ENCODE measurements at regions of chr14 and their contacts with region 1.

Region 1: DNA sequence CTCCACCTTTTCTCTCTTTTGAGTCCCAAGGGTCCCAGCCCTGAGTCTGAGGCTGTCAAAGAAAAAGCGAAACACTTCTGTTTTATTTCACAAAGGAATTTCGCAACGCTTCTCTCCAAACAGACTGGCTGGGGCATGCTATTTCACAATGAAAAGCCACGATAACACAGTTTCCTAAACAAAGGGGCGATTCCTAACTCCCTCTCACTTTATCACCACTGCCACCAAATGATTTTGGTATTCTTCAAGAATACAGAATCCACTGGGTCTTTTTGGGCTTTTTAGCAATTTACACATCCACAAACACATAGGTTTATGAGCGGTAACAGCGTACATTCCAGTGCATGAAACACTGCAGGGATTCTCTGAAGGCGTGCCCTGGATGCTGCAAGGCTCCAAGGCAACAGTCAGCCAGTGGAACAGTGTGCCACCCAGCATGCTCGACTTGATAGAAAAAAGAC is 161.2 kb downstream of the DAD1 start:
- DNase-seq: peak in 1 of 2 donors; percentile 62
- H3K4me3 ChIP-seq: peak overlapping the region in 1 of 2 donors; percentile 0
- H3K27ac ChIP-seq: peak overlapping the region; percentile 33 to 36
- H3K4me1 ChIP-seq: peaks cover 0 to 42% (median 29%) of the 10 kb centered on the region in 4 donors
- H3K27me3 ChIP-seq: no peaks in the 10 kb centered on the region
- CTCF ChIP-seq: no peak

Region 2: DNA sequence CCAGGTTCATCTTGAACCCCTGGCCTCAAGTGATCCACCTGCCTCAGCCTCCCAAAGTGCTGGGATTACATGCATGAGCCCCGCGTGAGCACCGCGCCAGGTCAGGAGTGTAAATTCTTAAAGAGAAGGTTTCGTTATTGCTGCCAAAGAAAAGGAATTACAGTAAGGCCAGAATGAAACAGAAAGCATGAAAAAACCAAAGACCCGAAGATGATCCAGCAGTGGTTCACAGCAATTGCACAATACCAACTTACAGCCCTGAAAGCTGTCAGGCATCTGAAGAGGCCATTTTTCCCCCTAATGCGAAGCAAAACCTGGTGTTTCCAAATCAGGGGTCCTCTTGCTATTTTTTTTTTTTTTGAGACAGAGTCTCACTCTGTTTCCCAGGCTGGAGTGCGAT is 480.8 kb after region 1 on chr14:
- intact Hi-C with region 1: no loop called
- DNase-seq: no peak
- H3K4me3 ChIP-seq: no peak overlapping the region
- H3K27ac ChIP-seq: no peak overlapping the region
- H3K4me1 ChIP-seq: peaks cover 0 to 7% (median 1%) of the 10 kb centered on the region in 4 donors
- H3K27me3 ChIP-seq: no peaks in the 10 kb centered on the region
- CTCF ChIP-seq: no peak

Region 3: DNA sequence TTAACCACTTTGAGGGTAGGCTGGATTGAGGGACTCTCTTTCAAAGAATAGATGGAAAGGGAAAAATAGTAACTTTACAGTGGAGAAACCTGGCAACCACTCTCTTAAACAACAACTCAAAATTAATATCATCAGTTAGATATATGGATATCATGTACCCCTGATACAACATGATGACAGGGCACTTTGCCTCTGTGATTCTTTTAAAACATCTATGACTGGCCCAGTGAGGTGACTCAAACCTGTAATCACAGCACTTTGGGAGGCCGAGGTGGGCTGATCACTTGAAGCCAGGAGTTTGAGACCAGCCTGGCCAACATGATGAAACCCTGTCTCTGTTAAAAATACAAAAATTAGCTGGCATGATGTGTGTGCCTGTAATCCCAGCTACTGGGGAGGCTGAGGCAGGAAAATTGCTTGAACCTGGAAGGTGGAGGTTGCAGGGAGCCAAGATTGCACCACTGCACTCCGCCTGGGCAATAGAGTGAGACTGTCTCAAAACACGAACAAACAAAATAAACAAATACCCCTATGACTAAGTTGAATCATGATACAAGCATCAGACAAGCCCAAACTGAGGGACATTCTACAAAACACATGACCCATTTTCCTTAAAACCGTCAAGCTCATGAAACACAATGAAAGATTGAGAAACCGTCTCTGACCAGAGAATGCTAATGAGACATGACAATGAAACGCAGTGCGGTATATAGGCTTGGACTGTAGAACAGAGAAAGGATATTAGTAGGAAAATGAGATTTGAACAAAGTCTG is 782.0 kb after region 1 on chr14:
- intact Hi-C with region 1: loop called (anchors 10 kb)
- DNase-seq: no peak
- H3K4me3 ChIP-seq: no peak overlapping the region
- H3K27ac ChIP-seq: no peak overlapping the region
- H3K4me1 ChIP-seq: no peaks in the 10 kb centered on the region
- H3K27me3 ChIP-seq: peaks cover 0 to 12% of the 10 kb centered on the region in 2 donors
- CTCF ChIP-seq: no peak

Measured in tibial artery (tissue), 4 donors.